Naive thymus-derived CD4-positive, alpha-beta T cell (primary cell): ENCODE measurements at regions of chr3 and their contacts with region 1.

Region 1: DNA sequence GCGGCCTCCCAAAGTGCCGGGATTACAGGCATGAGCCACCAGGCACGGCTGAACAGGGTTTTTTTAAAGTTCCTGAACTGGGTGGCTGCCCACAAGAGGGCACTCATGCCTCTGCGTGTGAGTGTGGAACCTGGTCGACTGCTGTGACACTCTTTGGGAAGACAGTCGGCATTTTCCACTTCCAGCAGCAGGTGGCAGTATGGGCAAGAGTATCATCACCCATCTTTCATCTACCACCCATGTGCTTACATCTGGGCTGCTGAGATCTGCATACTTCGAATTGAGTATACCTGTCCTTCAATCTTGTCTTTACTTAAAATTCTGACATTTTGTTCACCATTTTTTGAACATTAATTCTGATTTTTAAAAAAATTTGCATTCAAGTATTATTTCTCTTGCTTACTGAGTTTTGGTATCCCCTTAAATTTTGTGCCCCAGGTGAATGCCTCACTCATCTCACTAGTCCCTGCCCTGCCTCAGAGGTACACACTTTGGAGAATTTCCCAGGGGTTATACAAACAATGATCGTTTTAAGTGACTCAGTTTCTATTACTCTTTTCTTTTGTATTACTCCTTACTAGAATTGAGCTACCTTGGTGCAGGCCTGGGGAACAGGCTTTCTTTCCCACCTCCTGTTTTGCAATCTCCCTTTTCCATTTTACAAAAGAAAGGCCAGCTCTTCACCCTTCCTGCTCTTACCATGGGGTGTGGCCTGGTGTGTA is 11.8 kb downstream of the CLEC3B start:
- DNase-seq: peak; percentile 71 to 94 (median 92)
- ATAC-seq: peak; percentile 98
- H3K4me3 ChIP-seq: no peak overlapping the region
- H3K4me3 Mint-ChIP-seq: peak overlapping the region in 8 of 10 donors; percentile 33 to 84 (median 74)
- H3K27ac ChIP-seq: no peak overlapping the region
- H3K27ac Mint-ChIP-seq: no peak overlapping the region
- H3K4me1 ChIP-seq: peaks cover 9 to 29% of the 10 kb centered on the region in 2 donors
- H3K4me1 Mint-ChIP-seq: peaks cover 25 to 70% (median 58%) of the 10 kb centered on the region in 7 donors
- H3K27me3 ChIP-seq: no peaks in the 10 kb centered on the region
- H3K27me3 Mint-ChIP-seq: peaks cover 0 to 32% (median 8%) of the 10 kb centered on the region in 5 donors

Region 2: GRCh38 chr3:45021148-45021923 is 16.6 kb before region 1 on chr3:
- CTCF ChIA-PET with region 1: no interaction called
- POLR2A ChIA-PET with region 1: interaction called, 3 read pairs
- intact Hi-C with region 1: loop called in 1 of 2 experiments (anchors 1 kb)
- DNase-seq: no peak
- ATAC-seq: no peak
- H3K4me3 ChIP-seq: no peak overlapping the region
- H3K4me3 Mint-ChIP-seq: peak overlapping the region in 4 of 10 donors; percentile 26 to 58 (median 52)
- H3K27ac ChIP-seq: peak overlapping the region; percentile 36
- H3K27ac Mint-ChIP-seq: peak overlapping the region in 7 of 9 donors; percentile 56 to 97 (median 87)
- H3K4me1 ChIP-seq: peaks cover 0 to 16% of the 10 kb centered on the region in 2 donors
- H3K4me1 Mint-ChIP-seq: peaks cover 15 to 46% (median 42%) of the 10 kb centered on the region in 7 donors
- H3K27me3 ChIP-seq: no peaks in the 10 kb centered on the region
- H3K27me3 Mint-ChIP-seq: peaks cover 0 to 3% (median 0%) of the 10 kb centered on the region in 5 donors

Region 3: GRCh38 chr3:45224824-45225464 is 187.0 kb after region 1 on chr3:
- CTCF ChIA-PET with region 1: interaction called, 4 read pairs
- POLR2A ChIA-PET with region 1: no interaction called
- intact Hi-C with region 1: loop called in 1 of 2 experiments (anchors 5 kb)
- DNase-seq: peak in 4 of 9 donors; percentile 8 to 50 (median 20)
- ATAC-seq: peak; percentile 52
- H3K4me3 ChIP-seq: no peak overlapping the region
- H3K4me3 Mint-ChIP-seq: peak overlapping the region; percentile 84 to 89 (median 87)
- H3K27ac ChIP-seq: no peak overlapping the region
- H3K27ac Mint-ChIP-seq: peak overlapping the region in 3 of 9 donors; percentile 38 to 84 (median 66)
- H3K4me1 ChIP-seq: peaks cover 4 to 7% of the 10 kb centered on the region in 2 donors
- H3K4me1 Mint-ChIP-seq: peaks cover 10 to 16% (median 13%) of the 10 kb centered on the region in 7 donors
- H3K27me3 ChIP-seq: peaks cover 8 to 14% of the 10 kb centered on the region in 2 donors
- H3K27me3 Mint-ChIP-seq: peaks cover 71 to 82% (median 81%) of the 10 kb centered on the region in 5 donors

Region 4: GRCh38 chr3:45244356-45244755 is 206.5 kb after region 1 on chr3:
- CTCF ChIA-PET with region 1: no interaction called
- POLR2A ChIA-PET with region 1: no interaction called
- intact Hi-C with region 1: no loop called
- DNase-seq: no peak
- ATAC-seq: no peak
- H3K4me3 ChIP-seq: no peak overlapping the region
- H3K4me3 Mint-ChIP-seq: no peak overlapping the region
- H3K27ac ChIP-seq: no peak overlapping the region
- H3K27ac Mint-ChIP-seq: no peak overlapping the region
- H3K4me1 ChIP-seq: no peaks in the 10 kb centered on the region
- H3K4me1 Mint-ChIP-seq: no peaks in the 10 kb centered on the region
- H3K27me3 ChIP-seq: no peaks in the 10 kb centered on the region
- H3K27me3 Mint-ChIP-seq: peaks cover 4 to 10% (median 10%) of the 10 kb centered on the region in 5 donors

Region 5: GRCh38 chr3:45499529-45499928 is 461.6 kb after region 1 on chr3:
- CTCF ChIA-PET with region 1: interaction called, 10 read pairs
- POLR2A ChIA-PET with region 1: interaction called, 3 read pairs
- intact Hi-C with region 1: loop called (anchors 1 kb)
- DNase-seq: peak in 3 of 9 donors; percentile 19 to 33 (median 23)
- ATAC-seq: no peak
- H3K4me3 ChIP-seq: no peak overlapping the region
- H3K4me3 Mint-ChIP-seq: no peak overlapping the region
- H3K27ac ChIP-seq: no peak overlapping the region
- H3K27ac Mint-ChIP-seq: peak overlapping the region in 2 of 9 donors; percentile 47 to 76
- H3K4me1 ChIP-seq: peaks cover 0 to 26% of the 10 kb centered on the region in 2 donors
- H3K4me1 Mint-ChIP-seq: peaks cover 5 to 32% (median 25%) of the 10 kb centered on the region in 7 donors
- H3K27me3 ChIP-seq: no peaks in the 10 kb centered on the region
- H3K27me3 Mint-ChIP-seq: no peaks in the 10 kb centered on the region

Region 6: GRCh38 chr3:45656575-45657363 is 618.9 kb after region 1 on chr3:
- CTCF ChIA-PET with region 1: interaction called, 13 read pairs
- POLR2A ChIA-PET with region 1: no interaction called
- intact Hi-C with region 1: loop called (anchors 1 kb)
- DNase-seq: peak; percentile 65 to 83 (median 78)
- ATAC-seq: peak; percentile 94
- H3K4me3 ChIP-seq: no peak overlapping the region
- H3K4me3 Mint-ChIP-seq: no peak overlapping the region
- H3K27ac ChIP-seq: no peak overlapping the region
- H3K27ac Mint-ChIP-seq: peak overlapping the region in 1 of 9 donors; percentile 30
- H3K4me1 ChIP-seq: no peaks in the 10 kb centered on the region
- H3K4me1 Mint-ChIP-seq: peaks cover 6 to 27% (median 18%) of the 10 kb centered on the region in 7 donors
- H3K27me3 ChIP-seq: no peaks in the 10 kb centered on the region
- H3K27me3 Mint-ChIP-seq: no peaks in the 10 kb centered on the region